ENCODE measurements at regions of chr7 and their contacts with region 1.

Region 1: GRCh38 chr7:106870983-106871410 is 5.9 kb downstream of the PIK3CG start:
- DNase-seq: peak; percentile 75
- ATAC-seq: peak; percentile 83
- H3K4me3 ChIP-seq: peak overlapping the region in 4 of 5 experiments; percentile 1 to 37 (median 14)
- H3K4me3 Mint-ChIP-seq: peak overlapping the region; percentile 73
- H3K27ac ChIP-seq: peak overlapping the region; percentile 36 to 64
- H3K27ac Mint-ChIP-seq: peak overlapping the region; percentile 68
- H3K4me1 ChIP-seq: peaks cover 52 to 55% of the 10 kb centered on the region in 2 donors
- H3K4me1 Mint-ChIP-seq: peaks cover 76% of the 10 kb centered on the region
- H3K27me3 ChIP-seq: no peaks in the 10 kb centered on the region
- H3K27me3 Mint-ChIP-seq: no peaks in the 10 kb centered on the region
- CTCF ChIP-seq: no peak

Region 2: DNA sequence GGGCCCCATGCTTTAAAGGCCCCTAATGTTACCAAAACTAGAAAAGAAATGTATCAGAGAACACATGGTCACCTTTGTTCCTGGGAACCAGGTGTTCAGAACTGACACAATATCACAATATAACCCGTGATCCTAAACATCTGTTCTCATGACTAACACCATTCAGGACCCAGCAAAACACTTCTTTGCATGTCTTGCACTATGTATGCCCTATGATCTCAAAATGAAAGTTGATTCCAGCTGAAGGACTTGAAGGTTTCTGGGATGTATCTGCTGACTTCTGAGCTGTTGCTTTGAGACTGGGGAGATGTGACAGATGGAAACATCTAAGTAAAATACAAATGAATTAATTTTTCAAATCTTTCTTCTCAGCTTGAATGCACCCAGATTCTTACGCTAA is 43.4 kb before region 1 on chr7:
- CTCF ChIA-PET with region 1: no interaction called
- POLR2A ChIA-PET with region 1: no interaction called
- intact Hi-C with region 1: loop called (anchors 5 kb)
- DNase-seq: no peak
- ATAC-seq: no peak
- H3K4me3 ChIP-seq: no peak overlapping the region
- H3K4me3 Mint-ChIP-seq: no peak overlapping the region
- H3K27ac ChIP-seq: no peak overlapping the region
- H3K27ac Mint-ChIP-seq: no peak overlapping the region
- H3K4me1 ChIP-seq: no peaks in the 10 kb centered on the region
- H3K4me1 Mint-ChIP-seq: peaks cover 3% of the 10 kb centered on the region
- H3K27me3 ChIP-seq: no peaks in the 10 kb centered on the region
- H3K27me3 Mint-ChIP-seq: no peaks in the 10 kb centered on the region
- CTCF ChIP-seq: no peak

Measured in B cell (primary cell).